SK-N-SH (cell line): ENCODE measurements at regions of chr19 and their contacts with region 1.

Region 1: GRCh38 chr19:47075179-47075810 is 26.9 kb upstream of the TMEM160 start:
- DNase-seq: no peak
- H3K4me3 ChIP-seq: no peak overlapping the region
- H3K27ac ChIP-seq: no peak overlapping the region
- H3K4me1 ChIP-seq: 0 out of 4 replicates have a peak, but pooled peaks cover 0 to 5% of the 10 kb centered on the region in 2 experiments
- H3K27me3 ChIP-seq: no peaks in the 10 kb centered on the region
- CTCF ChIP-seq: no peak
- EP300 ChIP-seq: no peak
- RAD21 ChIP-seq: no peak

Region 2: DNA sequence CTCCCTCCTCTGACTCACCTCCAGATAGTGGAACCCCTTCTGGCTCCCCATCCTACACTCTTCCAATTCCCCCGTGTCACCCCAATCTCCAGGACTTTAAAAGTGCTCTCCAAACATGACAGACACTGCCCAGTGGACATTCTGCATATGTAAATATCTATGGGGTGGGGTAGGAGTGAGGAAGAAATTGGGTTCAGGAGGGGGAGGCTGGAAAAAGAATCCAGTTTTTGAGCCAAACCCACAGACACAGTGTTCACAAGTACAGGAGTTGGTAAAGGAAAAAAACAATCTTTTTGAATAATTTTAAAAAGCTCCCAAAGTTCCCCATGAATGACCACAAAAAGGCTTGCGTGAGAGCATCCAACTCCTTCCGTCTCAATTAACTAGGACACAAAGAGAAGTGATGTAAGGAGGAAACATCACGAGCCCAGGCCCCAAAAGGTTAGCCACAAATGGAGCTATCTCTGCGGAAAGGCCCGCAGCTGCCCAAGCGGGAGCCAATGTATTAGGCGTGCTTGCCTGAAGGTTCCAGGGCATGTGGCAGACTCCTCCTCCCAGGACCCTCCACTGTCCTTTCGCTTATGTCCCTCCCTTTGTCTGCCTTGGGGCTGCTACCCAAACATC is 20.3 kb after region 1 on chr19:
- CTCF ChIA-PET with region 1: interaction called, 15 read pairs
- POLR2A ChIA-PET with region 1: no interaction called
- DNase-seq: no peak
- H3K4me3 ChIP-seq: no peak overlapping the region
- H3K27ac ChIP-seq: no peak overlapping the region
- H3K4me1 ChIP-seq: peaks cover 0 to 2% of the 10 kb centered on the region in 2 experiments; a peak in 1 of 4 replicates
- H3K27me3 ChIP-seq: no peaks in the 10 kb centered on the region
- CTCF ChIP-seq: no peak
- EP300 ChIP-seq: no peak
- RAD21 ChIP-seq: no peak

Region 3: GRCh38 chr19:47107202-47107940 is 32.1 kb after region 1 on chr19:
- CTCF ChIA-PET with region 1: interaction called, 20 read pairs
- POLR2A ChIA-PET with region 1: no interaction called
- DNase-seq: no peak
- H3K4me3 ChIP-seq: peak overlapping the region in 1 of 2 experiments; percentile 8; a peak in 1 of 4 replicates
- H3K27ac ChIP-seq: peak overlapping the region; percentile 99 to 100
- H3K4me1 ChIP-seq: peaks cover 42 to 52% of the 10 kb centered on the region in 2 experiments
- H3K27me3 ChIP-seq: no peaks in the 10 kb centered on the region
- CTCF ChIP-seq: no peak
- EP300 ChIP-seq: peak in 1 of 2 experiments; percentile 40; a peak in 1 of 4 replicates
- RAD21 ChIP-seq: no peak

Region 4: DNA sequence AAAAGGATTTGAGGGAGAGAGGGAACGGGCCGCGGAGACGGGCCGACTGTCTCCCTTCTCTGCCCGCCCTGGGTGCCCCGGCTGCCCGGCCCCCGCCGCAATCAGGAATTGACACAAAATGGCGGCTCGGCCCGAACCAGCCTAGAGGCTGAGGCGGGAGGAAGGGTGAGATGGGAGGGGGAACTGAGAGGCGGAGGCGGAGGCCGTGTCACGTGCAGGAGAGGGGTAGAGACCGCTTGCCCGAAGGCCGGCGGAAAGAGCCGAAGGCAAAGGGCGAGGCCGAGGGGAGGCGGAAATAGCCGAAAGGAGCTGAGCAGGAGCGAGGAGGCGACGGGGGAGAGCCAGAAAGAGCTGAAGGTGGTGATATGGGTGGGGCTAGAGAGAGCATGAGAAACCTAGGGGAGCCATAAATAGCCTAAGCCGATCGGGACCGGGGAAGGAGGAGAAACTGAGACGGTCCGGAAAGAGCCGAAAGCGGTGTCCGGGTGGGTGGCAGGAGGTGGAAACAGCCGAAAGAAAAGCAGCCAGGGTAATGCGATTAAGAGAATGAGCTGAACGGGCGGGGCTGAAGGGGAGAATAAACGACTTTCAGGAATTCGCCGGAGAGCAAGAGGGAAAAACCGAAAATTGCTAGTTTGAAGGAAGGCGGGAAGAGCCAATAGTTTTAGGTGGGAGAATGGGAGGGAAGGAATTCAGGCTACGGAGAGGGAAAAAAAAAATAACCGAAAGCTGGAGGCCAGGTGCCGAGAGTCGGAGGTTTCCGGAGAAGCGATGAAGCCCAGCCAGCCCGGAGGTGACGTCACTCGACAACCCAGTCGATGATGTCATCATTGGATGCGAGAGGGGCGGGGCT is 37.9 kb after region 1 on chr19 and contains the start of gene ZC3H4:
- CTCF ChIA-PET with region 1: interaction called, 40 read pairs
- POLR2A ChIA-PET with region 1: interaction called, 4 read pairs
- DNase-seq: peak; percentile 92
- H3K4me3 ChIP-seq: peak within 1 kb of the TSS; percentile 78 to 92
- H3K27ac ChIP-seq: peak within 1 kb of the TSS; percentile 99 to 100
- H3K4me1 ChIP-seq: peaks cover 18 to 23% of the 10 kb centered on the region in 2 experiments
- H3K27me3 ChIP-seq: no peaks in the 10 kb centered on the region
- CTCF ChIP-seq: no peak
- EP300 ChIP-seq: peak in 1 of 2 experiments; percentile 28; a peak in 1 of 4 replicates
- RAD21 ChIP-seq: no peak
- polyA plus RNA-seq, gene ZC3H4: 3.9 and 7.6 TPM in 2 replicates

Region 5: DNA sequence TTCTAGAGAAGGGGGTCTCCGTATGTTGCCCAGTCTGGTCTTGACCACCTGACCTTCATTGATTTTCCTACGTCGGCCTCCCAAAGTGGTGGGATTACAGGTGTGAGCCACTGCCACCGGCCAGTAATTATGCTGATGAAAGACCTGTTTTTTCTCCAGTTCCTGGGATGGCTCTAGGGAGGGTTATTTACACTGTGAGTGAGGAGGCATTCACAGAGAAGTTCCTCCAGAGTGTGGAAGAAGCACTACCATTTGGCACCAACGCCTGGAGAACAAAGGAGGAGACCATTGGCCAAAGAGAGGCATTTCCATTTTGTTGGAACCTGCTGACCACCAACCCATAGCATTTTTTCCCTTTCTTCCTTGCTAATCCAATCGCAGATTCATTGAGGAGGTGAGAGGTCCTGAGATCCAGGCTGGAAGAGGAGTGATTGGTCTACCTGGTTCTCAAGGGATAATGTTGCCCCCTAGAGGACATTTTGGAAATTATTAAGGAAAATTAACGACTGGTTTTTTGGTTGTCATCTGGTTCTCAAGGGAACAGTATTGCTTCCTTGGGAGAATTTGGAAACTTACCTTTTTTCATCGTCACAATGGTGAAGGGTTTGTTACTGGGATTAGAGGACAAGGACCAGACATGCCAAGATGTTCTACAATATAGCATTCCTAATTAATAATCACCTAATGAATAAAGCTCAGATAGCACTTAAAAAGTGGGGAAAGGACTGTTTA is 49.8 kb after region 1 on chr19:
- CTCF ChIA-PET with region 1: interaction called, 40 read pairs
- POLR2A ChIA-PET with region 1: no interaction called
- DNase-seq: peak; percentile 73
- H3K4me3 ChIP-seq: no peak overlapping the region
- H3K27ac ChIP-seq: no peak overlapping the region
- H3K4me1 ChIP-seq: peaks cover 0 to 12% of the 10 kb centered on the region in 2 experiments; a peak in 2 of 4 replicates
- H3K27me3 ChIP-seq: no peaks in the 10 kb centered on the region
- CTCF ChIP-seq: peak; percentile 74
- EP300 ChIP-seq: no peak
- RAD21 ChIP-seq: peak; percentile 94

Region 6: GRCh38 chr19:47157431-47158321 is 82.4 kb after region 1 on chr19:
- CTCF ChIA-PET with region 1: no interaction called
- POLR2A ChIA-PET with region 1: no interaction called
- DNase-seq: no peak
- H3K4me3 ChIP-seq: no peak overlapping the region
- H3K27ac ChIP-seq: peak overlapping the region; percentile 51 to 52; a peak in 3 of 4 replicates
- H3K4me1 ChIP-seq: peaks cover 11 to 19% of the 10 kb centered on the region in 2 experiments
- H3K27me3 ChIP-seq: no peaks in the 10 kb centered on the region
- CTCF ChIP-seq: no peak
- EP300 ChIP-seq: no peak
- RAD21 ChIP-seq: no peak